ENCODE measurements at regions of chr12 and their contacts with region 1.

Region 1: GRCh38 chr12:30847259-30847658 is 79.3 kb upstream of the TSPAN11 start:
- DNase-seq: no peak

Region 2: GRCh38 chr12:31238764-31239387 is 391.6 kb after region 1 on chr12:
- intact Hi-C with region 1: loop called in 1 of 2 experiments (anchors 10 kb)
- DNase-seq: peak; percentile 81

Region 3: DNA sequence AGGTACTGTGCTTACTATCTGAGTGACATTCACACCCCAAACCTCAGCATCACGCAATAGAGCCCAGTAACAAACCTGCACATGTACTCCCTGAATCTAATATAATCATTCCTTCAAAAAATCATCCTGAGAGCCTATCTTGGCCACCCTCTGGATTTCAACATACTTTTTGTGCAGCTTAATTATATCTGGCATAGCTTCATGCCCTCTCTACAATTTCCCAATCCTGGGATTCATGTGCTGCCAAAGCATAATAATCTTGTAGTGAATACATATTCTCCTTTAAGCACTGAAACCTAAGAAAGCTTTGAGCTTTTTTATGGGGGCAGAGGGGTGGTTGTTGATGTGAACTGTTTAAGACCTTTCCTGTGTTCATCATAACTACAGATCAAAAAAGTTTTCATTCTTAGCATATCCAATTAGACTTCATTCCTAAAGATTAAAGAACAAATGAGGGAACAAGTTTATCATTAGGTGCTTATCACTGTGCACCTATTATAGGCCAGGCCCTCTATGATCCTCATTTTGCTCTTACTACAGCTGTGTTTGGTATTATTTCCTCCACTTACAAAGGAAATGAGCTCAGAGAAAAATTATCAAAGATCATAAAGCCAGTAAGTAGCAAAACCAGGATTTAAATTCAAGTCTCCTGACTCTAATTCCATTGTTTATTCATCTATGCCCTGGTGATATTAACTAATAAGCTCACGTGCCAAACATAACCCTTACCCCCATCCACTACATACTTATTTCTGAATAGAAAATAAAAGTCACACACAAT is 427.5 kb after region 1 on chr12:
- intact Hi-C with region 1: loop called in 1 of 2 experiments (anchors 10 kb)
- DNase-seq: no peak

Measured in posterior vena cava (tissue), 2 donors.